ENCODE measurements at regions of chr11 and their contacts with region 1.

Region 1: DNA sequence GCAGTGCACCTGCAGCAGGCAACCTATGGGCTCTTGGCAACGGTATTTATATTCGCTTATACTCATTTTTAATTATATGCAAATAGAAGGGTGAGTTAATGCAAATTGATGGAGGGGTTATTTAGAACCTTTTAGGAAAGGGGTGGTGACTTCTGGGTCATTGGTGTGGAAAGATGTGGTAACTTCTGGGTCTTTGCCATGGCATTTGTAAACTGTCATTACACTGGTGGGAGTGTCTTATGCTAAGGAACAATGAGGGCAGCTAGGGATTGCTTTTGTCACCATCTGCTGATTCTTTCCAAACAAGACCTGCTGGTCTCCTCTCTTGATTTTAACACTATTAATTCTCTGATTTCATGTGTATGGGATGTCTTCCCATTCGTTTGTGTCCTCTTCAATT is 11.7 kb upstream of the KAT5 start:
- DNase-seq: no peak
- ATAC-seq: no peak
- H3K4me3 ChIP-seq: no peak overlapping the region
- H3K27ac ChIP-seq: no peak overlapping the region
- H3K4me1 ChIP-seq: no peaks in the 10 kb centered on the region
- H3K27me3 ChIP-seq: no peaks in the 10 kb centered on the region

Region 2: GRCh38 chr11:65988791-65989592 is 288.6 kb after region 1 on chr11:
- intact Hi-C with region 1: loop called in 1 of 2 experiments (anchors 10 kb)
- DNase-seq: peak; percentile 87 to 92
- ATAC-seq: peak; percentile 96
- H3K4me3 ChIP-seq: no peak overlapping the region
- H3K27ac ChIP-seq: no peak overlapping the region
- H3K4me1 ChIP-seq: no peaks in the 10 kb centered on the region
- H3K27me3 ChIP-seq: no peaks in the 10 kb centered on the region

Region 3: DNA sequence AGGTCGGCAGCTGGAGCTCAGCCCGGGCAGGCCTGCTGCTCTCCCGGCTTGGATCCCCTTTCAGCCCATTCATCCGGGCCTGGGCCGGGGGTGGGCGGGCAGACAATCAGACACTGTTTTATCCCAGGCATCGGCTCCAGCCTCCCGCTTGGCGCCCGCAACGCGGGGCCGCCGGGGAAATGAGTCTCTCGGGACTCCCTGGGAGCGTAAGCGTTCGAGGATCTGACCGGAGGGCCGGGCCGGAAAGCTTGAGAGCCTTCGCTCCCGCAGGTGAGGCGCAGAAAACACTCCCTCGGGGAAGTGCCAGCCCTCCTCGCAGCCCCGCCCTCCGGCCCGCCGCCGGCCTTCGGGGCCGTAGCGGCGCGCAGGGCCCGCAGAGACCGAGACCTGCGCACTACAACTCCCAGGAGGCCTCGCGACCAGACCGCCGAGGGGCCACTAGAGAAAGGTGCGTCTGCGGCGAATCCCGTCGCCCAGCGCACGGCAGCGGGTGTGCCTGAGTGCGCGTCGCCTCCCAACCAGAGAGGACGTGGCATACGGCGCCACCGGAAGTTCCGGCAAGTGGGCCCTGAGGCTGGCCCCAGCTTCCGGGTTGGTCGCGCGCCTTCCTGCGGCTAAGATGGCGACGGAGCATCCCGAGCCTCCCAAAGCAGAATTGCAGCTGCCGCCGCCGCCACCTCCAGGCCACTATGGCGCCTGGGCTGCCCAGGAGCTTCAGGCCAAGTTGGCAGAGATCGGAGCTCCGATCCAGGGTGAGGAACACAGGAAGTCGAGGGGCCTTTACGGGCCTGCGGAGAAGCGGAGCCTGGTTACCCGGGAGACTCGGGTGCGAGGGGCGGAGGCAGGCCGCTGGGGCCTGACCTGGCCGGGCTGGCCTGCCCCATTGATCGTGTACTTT is 351.6 kb after region 1 on chr11 and contains the start of gene SF3B2:
- intact Hi-C with region 1: no loop called
- DNase-seq: peak; percentile 99
- ATAC-seq: peak; percentile 98
- H3K4me3 ChIP-seq: peak within 1 kb of the TSS; percentile 96 to 99
- H3K27ac ChIP-seq: peak within 1 kb of the TSS; percentile 45 to 76
- H3K4me1 ChIP-seq: peaks cover 0 to 4% of the 10 kb centered on the region in 2 donors
- H3K27me3 ChIP-seq: no peaks in the 10 kb centered on the region
- total RNA-seq, gene SF3B2: 141 to 146 TPM